Tibial artery (tissue), 4 donors: ENCODE measurements at regions of chr9 and their contacts with region 1.

Region 1: GRCh38 chr9:102499468-102499867 is 495.7 kb upstream of the CYLC2 start:
- DNase-seq: no peak
- H3K4me3 ChIP-seq: no peak overlapping the region
- H3K27ac ChIP-seq: no peak overlapping the region
- H3K4me1 ChIP-seq: no peaks in the 10 kb centered on the region
- H3K27me3 ChIP-seq: no peaks in the 10 kb centered on the region
- CTCF ChIP-seq: no peak

Region 2: GRCh38 chr9:101115102-101115501 is 1384.4 kb before region 1 on chr9:
- intact Hi-C with region 1: no loop called
- DNase-seq: no peak
- H3K4me3 ChIP-seq: no peak overlapping the region
- H3K27ac ChIP-seq: no peak overlapping the region
- H3K4me1 ChIP-seq: no peaks in the 10 kb centered on the region
- H3K27me3 ChIP-seq: no peaks in the 10 kb centered on the region
- CTCF ChIP-seq: no peak

Region 3: DNA sequence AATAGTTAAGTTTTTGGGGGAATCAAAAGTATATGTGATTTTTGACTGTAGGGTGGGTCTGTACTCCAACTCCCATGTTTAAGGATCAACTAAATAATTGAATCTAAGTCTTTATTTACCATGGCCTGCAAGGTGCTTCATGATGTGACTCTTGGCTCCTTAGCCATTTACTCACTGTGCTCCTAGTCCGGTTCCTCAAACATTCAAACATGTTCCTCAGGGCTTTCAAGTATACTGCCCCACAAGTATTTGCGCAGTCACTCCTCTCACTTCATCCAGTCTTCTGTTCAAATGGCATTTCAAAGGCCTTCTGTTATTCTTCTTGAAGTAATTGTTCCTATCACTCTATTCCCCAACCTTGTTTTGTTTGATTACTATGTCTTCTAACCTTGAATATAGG is 1611.0 kb after region 1 on chr9:
- intact Hi-C with region 1: loop called (anchors 5 kb)
- DNase-seq: no peak
- H3K4me3 ChIP-seq: no peak overlapping the region
- H3K27ac ChIP-seq: no peak overlapping the region
- H3K4me1 ChIP-seq: no peaks in the 10 kb centered on the region
- H3K27me3 ChIP-seq: no peaks in the 10 kb centered on the region
- CTCF ChIP-seq: no peak